ENCODE measurements at regions of chr1 and their contacts with region 1.

Region 1: GRCh38 chr1:45686317-45687013 is at the start of gene GPBP1L1:
- DNase-seq: peak; percentile 97 to 98 (median 97)
- H3K4me3 ChIP-seq: peak within 1 kb of the TSS; percentile 99 to 100
- H3K4me3 Mint-ChIP-seq: peak within 1 kb of the TSS; percentile 95 to 100 (median 99)
- H3K27ac ChIP-seq: peak within 1 kb of the TSS; percentile 94
- H3K27ac Mint-ChIP-seq: peak within 1 kb of the TSS; percentile 98 to 100 (median 100)
- H3K4me1 ChIP-seq: peaks cover 63% of the 10 kb centered on the region
- H3K4me1 Mint-ChIP-seq: peaks cover 28 to 68% (median 46%) of the 10 kb centered on the region in 4 donors
- H3K27me3 ChIP-seq: no peaks in the 10 kb centered on the region
- H3K27me3 Mint-ChIP-seq: no peaks in the 10 kb centered on the region
- total RNA-seq, gene GPBP1L1: 175 to 187 TPM

Region 2: GRCh38 chr1:44730741-44731512 is 955.5 kb before region 1 on chr1 and contains the start of gene RNU5D-1:
- CTCF ChIA-PET with region 1: no interaction called
- POLR2A ChIA-PET with region 1: interaction called, 4 read pairs
- intact Hi-C with region 1: loop called (anchors 2 kb)
- DNase-seq: peak; percentile 90 to 94 (median 91)
- H3K4me3 ChIP-seq: peak within 1 kb of the TSS; percentile 31 to 39
- H3K4me3 Mint-ChIP-seq: peak within 1 kb of the TSS; percentile 54 to 93 (median 84)
- H3K27ac ChIP-seq: peak within 1 kb of the TSS; percentile 96
- H3K27ac Mint-ChIP-seq: peak within 1 kb of the TSS; percentile 97 to 100 (median 99)
- H3K4me1 ChIP-seq: peaks cover 22% of the 10 kb centered on the region
- H3K4me1 Mint-ChIP-seq: peaks cover 18 to 38% (median 24%) of the 10 kb centered on the region in 4 donors
- H3K27me3 ChIP-seq: no peaks in the 10 kb centered on the region
- H3K27me3 Mint-ChIP-seq: no peaks in the 10 kb centered on the region
- total RNA-seq, gene RNU5D-1: not detected

Region 3: GRCh38 chr1:44985747-44986359 is 700.6 kb before region 1 on chr1:
- CTCF ChIA-PET with region 1: no interaction called
- POLR2A ChIA-PET with region 1: no interaction called
- intact Hi-C with region 1: loop called (anchors 10 kb)
- DNase-seq: no peak
- H3K4me3 ChIP-seq: peak overlapping the region; percentile 67 to 70
- H3K4me3 Mint-ChIP-seq: peak overlapping the region; percentile 98 to 100 (median 99)
- H3K27ac ChIP-seq: peak overlapping the region; percentile 59
- H3K27ac Mint-ChIP-seq: peak overlapping the region; percentile 34 to 99 (median 96)
- H3K4me1 ChIP-seq: peaks cover 11% of the 10 kb centered on the region
- H3K4me1 Mint-ChIP-seq: peaks cover 15 to 26% (median 21%) of the 10 kb centered on the region in 4 donors
- H3K27me3 ChIP-seq: no peaks in the 10 kb centered on the region
- H3K27me3 Mint-ChIP-seq: no peaks in the 10 kb centered on the region

Region 4: GRCh38 chr1:45393718-45394302 is 292.7 kb before region 1 on chr1:
- CTCF ChIA-PET with region 1: no interaction called
- POLR2A ChIA-PET with region 1: no interaction called
- intact Hi-C with region 1: no loop called
- DNase-seq: no peak
- H3K4me3 ChIP-seq: no peak overlapping the region
- H3K4me3 Mint-ChIP-seq: no peak overlapping the region
- H3K27ac ChIP-seq: no peak overlapping the region
- H3K27ac Mint-ChIP-seq: peak overlapping the region in 1 of 7 donors; percentile 8
- H3K4me1 ChIP-seq: no peaks in the 10 kb centered on the region
- H3K4me1 Mint-ChIP-seq: peaks cover 0 to 1% (median 0%) of the 10 kb centered on the region in 4 donors
- H3K27me3 ChIP-seq: no peaks in the 10 kb centered on the region
- H3K27me3 Mint-ChIP-seq: no peaks in the 10 kb centered on the region

Region 5: DNA sequence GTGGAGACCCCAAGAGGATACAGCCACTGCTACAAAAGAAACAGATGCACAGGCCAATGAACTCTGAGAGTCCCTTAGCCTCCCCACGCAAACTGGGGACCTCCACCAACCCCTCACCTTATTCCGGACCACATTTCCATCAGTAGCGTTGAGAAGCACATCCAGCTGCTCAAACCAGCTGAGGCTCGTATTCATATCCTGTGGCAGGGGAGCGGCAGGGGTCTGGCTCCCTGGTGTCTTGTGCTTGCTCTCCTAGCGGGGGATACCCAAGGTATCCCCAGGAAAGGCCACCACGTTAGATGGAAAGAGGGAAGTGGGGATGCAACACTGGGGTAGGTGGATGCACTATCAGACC is 187.1 kb before region 1 on chr1:
- CTCF ChIA-PET with region 1: no interaction called
- POLR2A ChIA-PET with region 1: interaction called, 5 read pairs
- intact Hi-C with region 1: loop called (anchors 1 kb)
- DNase-seq: peak in 1 of 5 donors; percentile 4
- H3K4me3 ChIP-seq: peak overlapping the region; percentile 62 to 88
- H3K4me3 Mint-ChIP-seq: peak overlapping the region; percentile 91 to 96 (median 95)
- H3K27ac ChIP-seq: peak overlapping the region; percentile 62
- H3K27ac Mint-ChIP-seq: peak overlapping the region; percentile 81 to 98 (median 96)
- H3K4me1 ChIP-seq: peaks cover 18% of the 10 kb centered on the region
- H3K4me1 Mint-ChIP-seq: peaks cover 31 to 34% (median 31%) of the 10 kb centered on the region in 4 donors
- H3K27me3 ChIP-seq: no peaks in the 10 kb centered on the region
- H3K27me3 Mint-ChIP-seq: no peaks in the 10 kb centered on the region

Region 6: DNA sequence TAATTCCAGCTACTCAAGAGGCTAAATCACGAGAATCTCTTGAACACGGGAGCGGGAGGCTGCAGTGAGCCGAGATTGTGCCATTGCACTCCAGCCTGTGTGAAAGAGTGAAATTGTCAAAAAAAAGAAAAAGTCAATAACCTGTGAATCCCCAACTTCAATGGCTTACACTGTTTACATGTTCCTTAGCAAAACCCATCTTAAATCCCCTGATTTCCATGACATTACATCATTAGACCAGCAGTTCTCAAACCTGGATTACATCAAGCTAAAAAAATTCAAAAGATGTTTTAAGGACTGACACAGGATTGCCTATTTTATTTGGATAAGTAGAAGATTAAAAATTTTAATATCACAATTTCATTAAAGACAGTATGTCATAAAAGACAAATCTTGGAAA is 12.5 kb before region 1 on chr1:
- CTCF ChIA-PET with region 1: interaction called, 3 read pairs
- POLR2A ChIA-PET with region 1: interaction called, 18 read pairs
- intact Hi-C with region 1: no loop called
- DNase-seq: no peak
- H3K4me3 ChIP-seq: no peak overlapping the region
- H3K4me3 Mint-ChIP-seq: no peak overlapping the region
- H3K27ac ChIP-seq: no peak overlapping the region
- H3K27ac Mint-ChIP-seq: no peak overlapping the region
- H3K4me1 ChIP-seq: peaks cover 80% of the 10 kb centered on the region
- H3K4me1 Mint-ChIP-seq: peaks cover 50 to 86% (median 67%) of the 10 kb centered on the region in 4 donors
- H3K27me3 ChIP-seq: no peaks in the 10 kb centered on the region
- H3K27me3 Mint-ChIP-seq: no peaks in the 10 kb centered on the region

Region 7: DNA sequence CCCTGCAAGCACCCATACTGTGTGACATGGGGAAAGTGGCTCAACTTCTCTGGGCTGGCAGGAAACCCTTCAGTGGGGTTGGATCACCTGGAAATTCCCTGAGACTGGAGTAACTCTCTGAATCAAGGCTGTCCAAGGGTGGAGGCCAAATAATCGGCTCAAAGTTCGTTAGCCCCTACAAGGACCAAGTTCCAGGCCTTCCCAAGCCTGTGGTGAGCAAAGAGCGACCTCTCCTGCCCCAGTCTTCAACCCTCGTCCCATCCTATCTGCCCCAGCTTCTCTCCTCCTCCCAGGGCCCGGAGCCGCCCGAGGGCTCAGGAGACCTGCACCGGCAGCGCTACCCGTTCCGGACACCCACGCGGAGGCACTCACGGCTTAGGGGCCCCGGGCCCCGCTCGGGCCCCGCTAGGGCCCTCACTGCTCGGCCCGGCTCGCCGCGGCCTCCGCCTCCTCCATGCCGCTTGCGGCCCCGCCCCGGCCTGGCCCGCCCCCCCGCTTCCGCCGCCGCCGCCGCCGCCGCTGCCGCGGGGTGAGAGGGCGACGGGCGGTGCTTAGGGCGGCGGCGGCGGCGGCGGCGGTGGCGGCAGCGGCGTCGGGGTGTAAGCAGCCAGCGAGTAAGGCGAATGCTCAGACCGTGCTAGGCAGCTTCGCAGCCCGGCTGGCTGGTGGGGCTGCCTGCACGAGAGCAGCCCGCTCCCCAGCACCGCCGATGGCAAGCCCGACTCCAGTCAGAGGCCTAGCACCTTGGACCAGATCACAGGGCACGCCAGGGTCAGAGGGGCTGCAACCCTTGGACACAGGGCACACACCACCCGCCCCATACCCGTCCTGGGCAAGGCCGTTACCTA is 511.7 kb after region 1 on chr1 and contains the start of gene POMGNT1:
- CTCF ChIA-PET with region 1: no interaction called
- POLR2A ChIA-PET with region 1: no interaction called
- intact Hi-C with region 1: loop called (anchors 5 kb)
- DNase-seq: peak; percentile 69 to 81 (median 78)
- H3K4me3 ChIP-seq: peak within 1 kb of the TSS; percentile 78 to 86
- H3K4me3 Mint-ChIP-seq: peak within 1 kb of the TSS; percentile 83 to 89 (median 88)
- H3K27ac ChIP-seq: peak within 1 kb of the TSS; percentile 76
- H3K27ac Mint-ChIP-seq: peak within 1 kb of the TSS; percentile 38 to 88 (median 79)
- H3K4me1 ChIP-seq: peaks cover 33% of the 10 kb centered on the region
- H3K4me1 Mint-ChIP-seq: peaks cover 12 to 39% (median 25%) of the 10 kb centered on the region in 4 donors
- H3K27me3 ChIP-seq: no peaks in the 10 kb centered on the region
- H3K27me3 Mint-ChIP-seq: peaks cover 0 to 1% of the 10 kb centered on the region in 2 donors
- total RNA-seq, gene POMGNT1: 36.0 to 41.4 TPM

Region 8: DNA sequence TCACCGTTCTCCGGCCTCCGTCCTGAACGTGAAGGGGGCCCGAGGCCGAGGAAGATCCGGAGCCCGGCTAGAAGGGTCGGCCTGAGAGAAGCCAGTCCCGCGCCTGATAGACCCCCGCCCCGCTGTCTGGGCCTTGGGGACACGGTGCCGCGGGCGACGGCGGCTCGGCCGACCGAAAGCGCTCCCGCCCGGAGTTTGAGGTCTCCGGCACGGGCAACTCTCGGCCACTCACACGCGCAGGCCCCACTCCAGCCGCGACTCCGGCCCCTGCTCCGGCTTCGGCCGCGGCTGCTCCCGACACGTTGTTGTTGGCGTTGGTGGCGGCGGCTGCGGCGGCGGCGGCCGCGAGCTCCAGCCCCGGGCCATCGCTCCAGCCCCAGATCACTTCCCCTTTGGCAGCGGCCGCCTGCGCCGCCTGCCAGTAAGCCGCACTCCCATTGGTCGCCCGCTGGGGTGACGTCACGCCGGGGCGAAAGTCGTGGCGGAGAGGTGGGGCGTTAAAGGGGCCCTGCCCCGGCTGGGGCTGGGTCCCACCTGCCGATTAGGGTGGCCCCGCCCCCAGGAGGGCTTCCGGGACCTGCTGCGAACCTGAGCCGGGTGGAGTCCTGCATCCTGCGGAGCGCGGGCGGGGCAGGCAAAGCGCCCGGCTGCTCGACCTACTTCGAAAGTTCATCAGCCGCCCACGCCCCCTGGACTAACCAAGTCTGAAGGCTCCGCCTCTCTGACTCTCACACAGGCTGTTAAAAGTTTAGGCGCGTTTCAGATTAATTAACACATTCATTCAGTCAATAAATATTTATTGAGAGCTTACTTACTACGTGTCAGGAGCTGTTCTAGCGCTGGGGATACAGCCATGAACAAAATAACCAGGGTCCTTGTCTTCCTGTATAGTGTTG is 1032.5 kb after region 1 on chr1 and contains the start of gene EFCAB14:
- CTCF ChIA-PET with region 1: no interaction called
- POLR2A ChIA-PET with region 1: interaction called, 4 read pairs
- intact Hi-C with region 1: loop called (anchors 5 kb)
- DNase-seq: peak; percentile 99 to 100 (median 99)
- H3K4me3 ChIP-seq: peak within 1 kb of the TSS; percentile 40 to 72
- H3K4me3 Mint-ChIP-seq: peak within 1 kb of the TSS; percentile 90 to 97 (median 92)
- H3K27ac ChIP-seq: peak within 1 kb of the TSS; percentile 88
- H3K27ac Mint-ChIP-seq: peak within 1 kb of the TSS; percentile 91 to 97 (median 95)
- H3K4me1 ChIP-seq: peaks cover 40% of the 10 kb centered on the region
- H3K4me1 Mint-ChIP-seq: peaks cover 31 to 53% (median 45%) of the 10 kb centered on the region in 4 donors
- H3K27me3 ChIP-seq: no peaks in the 10 kb centered on the region
- H3K27me3 Mint-ChIP-seq: no peaks in the 10 kb centered on the region
- total RNA-seq, gene EFCAB14: 96.7 to 98.5 TPM